Dorsolateral prefrontal cortex (tissue), 120 donors: ENCODE measurements at regions of chr12 and their contacts with region 1.

Region 1: DNA sequence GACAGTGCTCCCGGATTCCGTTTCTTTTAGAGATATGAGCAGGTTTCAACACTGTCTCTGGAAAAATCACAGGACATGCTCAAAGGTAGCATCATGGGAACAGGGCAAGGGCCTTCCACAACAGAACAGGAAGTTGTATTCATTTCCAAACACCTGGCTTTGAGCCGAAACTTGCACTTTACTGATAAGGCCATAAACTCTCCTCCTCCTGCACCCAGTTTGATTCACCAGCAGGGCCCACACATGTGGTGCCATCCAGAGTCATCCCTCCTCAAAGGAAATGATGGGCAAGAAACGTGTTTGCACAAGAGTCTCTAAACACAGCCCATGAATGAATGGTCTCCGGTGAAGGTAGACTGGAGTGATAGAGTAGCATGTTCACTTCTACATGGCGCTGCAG is 268.4 kb upstream of the FKBP4 start:
- DNase-seq: no peak
- H3K4me3 ChIP-seq: no peak overlapping the region
- H3K27ac ChIP-seq: no peak overlapping the region
- H3K27me3 ChIP-seq: no peaks in the 10 kb centered on the region
- CTCF ChIP-seq: no peak

Region 2: GRCh38 chr12:2666411-2666810 is 140.0 kb after region 1 on chr12:
- intact Hi-C with region 1: loop called in 1 of 2 experiments (anchors 10 kb)
- DNase-seq: peak in 1 of 10 donors; percentile 9
- H3K4me3 ChIP-seq: no peak overlapping the region
- H3K27ac ChIP-seq: no peak overlapping the region
- H3K27me3 ChIP-seq: no peaks in the 10 kb centered on the region
- CTCF ChIP-seq: no peak